Activated T-helper 1 cell treated with anti-CD3 and anti-CD28 coated beads, Interleukin-12 subunit alpha, Interleukin-12 subunit beta, Interleukin-2, Interleukin-4 antibody, amounts not matched to agents 30 ng/mL and 10 ng/mL and 1 ng/mL, durations not matched to agents 14 hours and 24 hours and 36 hours (primary cell): ENCODE measurements at regions of chr3 and their contacts with region 1.

Region 1: GRCh38 chr3:44761424-44762169 is at the starts of genes KIAA1143 and KIF15:
- DNase-seq: peak; percentile 95
- H3K4me3 Mint-ChIP-seq: peak within 1 kb of the TSS; percentile 93
- H3K27ac Mint-ChIP-seq: peak within 1 kb of the TSS; percentile 90
- H3K4me1 Mint-ChIP-seq: peaks cover 38% of the 10 kb centered on the region
- H3K27me3 Mint-ChIP-seq: peaks cover 4% of the 10 kb centered on the region
- total RNA-seq, gene KIAA1143: 39.2 and 40.4 TPM in 2 replicates
- total RNA-seq, gene KIF15: 23.2 and 25.5 TPM in 2 replicates

Region 2: GRCh38 chr3:44338010-44338827 is 423.4 kb before region 1 on chr3 and contains the start of gene TCAIM:
- intact Hi-C with region 1: loop called (anchors 1 kb)
- DNase-seq: peak; percentile 98
- H3K4me3 Mint-ChIP-seq: peak within 1 kb of the TSS; percentile 98
- H3K27ac Mint-ChIP-seq: peak within 1 kb of the TSS; percentile 97
- H3K4me1 Mint-ChIP-seq: peaks cover 17% of the 10 kb centered on the region
- H3K27me3 Mint-ChIP-seq: peaks cover 4% of the 10 kb centered on the region
- total RNA-seq, gene TCAIM: 13.6 and 14.4 TPM in 2 replicates

Region 3: GRCh38 chr3:44510000-44510368 is 251.6 kb before region 1 on chr3:
- intact Hi-C with region 1: loop called (anchors 1 kb)
- DNase-seq: no peak
- H3K4me3 Mint-ChIP-seq: peak overlapping the region; percentile 90
- H3K27ac Mint-ChIP-seq: peak overlapping the region; percentile 75
- H3K4me1 Mint-ChIP-seq: peaks cover 38% of the 10 kb centered on the region
- H3K27me3 Mint-ChIP-seq: no peaks in the 10 kb centered on the region

Region 4: GRCh38 chr3:44624749-44625480 is 136.7 kb before region 1 on chr3 and contains the start of gene ZNF197:
- intact Hi-C with region 1: loop called (anchors 1 kb)
- DNase-seq: peak; percentile 54
- H3K4me3 Mint-ChIP-seq: peak within 1 kb of the TSS; percentile 90
- H3K27ac Mint-ChIP-seq: peak within 1 kb of the TSS; percentile 80
- H3K4me1 Mint-ChIP-seq: peaks cover 25% of the 10 kb centered on the region
- H3K27me3 Mint-ChIP-seq: no peaks in the 10 kb centered on the region
- total RNA-seq, gene ZNF197: 11.6 and 12.0 TPM in 2 replicates

Region 5: DNA sequence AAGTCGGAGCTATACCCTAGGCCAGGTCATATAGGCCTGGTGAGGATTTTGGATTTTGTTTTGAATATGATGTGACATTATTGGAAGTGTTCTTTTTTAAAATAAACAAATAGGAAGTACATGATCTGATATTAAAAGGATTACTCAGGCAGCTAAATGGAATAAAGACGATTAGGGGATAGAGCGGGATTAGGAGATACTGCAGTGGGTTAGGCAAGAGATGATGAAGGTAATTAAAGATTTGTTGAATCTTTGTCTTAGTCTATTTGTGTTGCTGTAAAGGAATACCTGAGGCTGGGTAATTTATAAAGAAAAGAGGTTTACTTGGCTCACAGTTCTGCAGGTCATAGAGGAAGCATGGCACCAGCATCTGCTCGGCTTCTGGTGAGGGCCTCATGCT is 21.3 kb after region 1 on chr3:
- intact Hi-C with region 1: no loop called
- DNase-seq: no peak
- H3K4me3 Mint-ChIP-seq: no peak overlapping the region
- H3K27ac Mint-ChIP-seq: no peak overlapping the region
- H3K4me1 Mint-ChIP-seq: no peaks in the 10 kb centered on the region
- H3K27me3 Mint-ChIP-seq: no peaks in the 10 kb centered on the region

Region 6: GRCh38 chr3:44861412-44862220 is 100.0 kb after region 1 on chr3 and contains the start of gene TMEM42:
- intact Hi-C with region 1: loop called (anchors 1 kb)
- DNase-seq: peak; percentile 87
- H3K4me3 Mint-ChIP-seq: peak within 1 kb of the TSS; percentile 90
- H3K27ac Mint-ChIP-seq: peak within 1 kb of the TSS; percentile 90
- H3K4me1 Mint-ChIP-seq: peaks cover 33% of the 10 kb centered on the region
- H3K27me3 Mint-ChIP-seq: no peaks in the 10 kb centered on the region
- total RNA-seq, gene TMEM42: 8.6 and 10.0 TPM in 2 replicates